Activated B cell treated with CpG ODN at 0.5 μM for 24 hours (primary cell): ENCODE measurements at regions of chr1 and their contacts with region 1.

Region 1: DNA sequence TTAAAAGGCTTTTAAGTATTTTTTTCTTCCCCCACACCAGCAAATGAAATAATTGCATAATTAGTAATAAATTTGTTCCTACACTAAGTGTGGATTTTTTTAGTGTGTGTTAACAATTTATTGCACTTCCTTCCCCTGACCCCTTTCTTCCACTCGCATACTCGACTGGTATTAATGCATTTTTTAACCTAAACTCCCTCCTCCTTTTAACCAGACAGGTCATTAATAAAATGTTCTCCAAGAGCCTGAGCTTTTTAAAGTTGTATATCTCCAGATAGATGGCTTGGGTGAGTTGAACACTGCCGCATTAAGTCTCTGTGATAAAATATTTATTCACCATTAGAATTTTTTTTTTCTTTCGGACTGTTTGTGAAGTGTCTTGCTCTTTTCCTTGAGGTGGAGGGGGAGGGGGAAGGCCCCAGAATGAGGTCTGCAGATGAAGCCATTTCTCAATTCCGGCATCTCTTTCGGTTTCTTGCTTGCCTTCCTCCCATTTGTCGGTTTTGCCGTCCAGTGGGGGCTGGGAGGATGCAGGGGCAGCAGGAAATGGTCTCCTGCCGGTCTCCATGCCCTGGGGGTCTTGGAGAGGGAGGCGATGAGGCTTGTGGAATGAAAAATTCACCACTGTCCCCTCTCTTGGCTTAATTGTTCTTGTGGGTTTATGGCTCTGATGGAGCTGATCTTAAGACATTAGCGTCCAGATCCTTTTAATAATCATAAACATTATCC is 64.1 kb upstream of the ACTL8 start:
- DNase-seq: no peak
- ATAC-seq: no peak
- H3K4me3 Mint-ChIP-seq: no peak overlapping the region
- H3K27ac Mint-ChIP-seq: no peak overlapping the region
- H3K4me1 Mint-ChIP-seq: no peaks in the 10 kb centered on the region
- H3K27me3 Mint-ChIP-seq: peaks cover 5% of the 10 kb centered on the region
- CTCF ChIP-seq: no peak

Region 2: GRCh38 chr1:17615959-17616358 is 75.1 kb before region 1 on chr1:
- CTCF ChIA-PET with region 1: no interaction called
- POLR2A ChIA-PET with region 1: interaction called, 10 read pairs
- intact Hi-C with region 1: no loop called
- DNase-seq: no peak
- ATAC-seq: no peak
- H3K4me3 Mint-ChIP-seq: no peak overlapping the region
- H3K27ac Mint-ChIP-seq: no peak overlapping the region
- H3K4me1 Mint-ChIP-seq: no peaks in the 10 kb centered on the region
- H3K27me3 Mint-ChIP-seq: peaks cover 10% of the 10 kb centered on the region
- CTCF ChIP-seq: no peak